ENCODE measurements at regions of chr17 and their contacts with region 1.

Region 1: DNA sequence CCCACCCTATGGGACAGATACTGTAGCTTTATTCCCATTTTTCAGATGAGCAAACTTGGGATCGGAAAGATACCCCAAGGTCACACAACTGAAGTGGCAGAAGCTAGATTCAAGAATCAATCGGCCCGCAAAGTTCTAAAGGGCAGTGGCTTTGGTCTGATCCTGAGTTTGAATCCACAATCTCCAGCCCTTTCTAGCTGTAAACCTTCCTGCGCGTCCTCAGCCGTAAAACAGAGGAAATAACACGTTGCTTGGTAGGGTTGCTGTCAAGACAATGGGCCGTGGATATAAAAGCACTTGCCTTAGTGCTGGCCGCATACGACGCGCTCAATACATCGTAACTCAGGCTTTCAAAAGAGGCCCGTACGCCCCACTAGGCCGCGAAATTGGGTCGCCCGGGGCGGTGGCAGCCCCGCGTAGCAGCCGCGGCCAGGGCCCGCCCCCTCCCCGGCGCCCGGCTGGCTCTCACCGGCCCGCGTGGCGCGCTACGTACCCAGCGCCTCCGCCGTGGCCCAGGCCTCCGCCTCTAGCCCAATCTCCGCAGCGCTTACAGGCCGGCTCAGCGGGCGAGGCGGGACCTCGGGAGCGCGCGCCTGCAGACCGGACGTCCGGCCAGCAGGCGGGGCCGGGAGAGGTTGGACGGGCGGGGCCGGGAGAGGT is at the start of gene DCAKD:
- DNase-seq: no peak
- ATAC-seq: peak; percentile 97
- H3K4me3 ChIP-seq: peak within 1 kb of the TSS; percentile 76
- H3K27ac ChIP-seq: peak within 1 kb of the TSS; percentile 95
- H3K4me1 ChIP-seq: peaks cover 13% of the 10 kb centered on the region
- H3K27me3 ChIP-seq: no peaks in the 10 kb centered on the region
- CTCF ChIP-seq: no peak
- EP300 ChIP-seq: no peak
- POLR2A ChIP-seq: peak; percentile 77; the same call in 1 of the 2 replicates
- RAD21 ChIP-seq: no peak
- polyA plus RNA-seq, gene DCAKD: 11.6 to 11.7 TPM

Region 2: DNA sequence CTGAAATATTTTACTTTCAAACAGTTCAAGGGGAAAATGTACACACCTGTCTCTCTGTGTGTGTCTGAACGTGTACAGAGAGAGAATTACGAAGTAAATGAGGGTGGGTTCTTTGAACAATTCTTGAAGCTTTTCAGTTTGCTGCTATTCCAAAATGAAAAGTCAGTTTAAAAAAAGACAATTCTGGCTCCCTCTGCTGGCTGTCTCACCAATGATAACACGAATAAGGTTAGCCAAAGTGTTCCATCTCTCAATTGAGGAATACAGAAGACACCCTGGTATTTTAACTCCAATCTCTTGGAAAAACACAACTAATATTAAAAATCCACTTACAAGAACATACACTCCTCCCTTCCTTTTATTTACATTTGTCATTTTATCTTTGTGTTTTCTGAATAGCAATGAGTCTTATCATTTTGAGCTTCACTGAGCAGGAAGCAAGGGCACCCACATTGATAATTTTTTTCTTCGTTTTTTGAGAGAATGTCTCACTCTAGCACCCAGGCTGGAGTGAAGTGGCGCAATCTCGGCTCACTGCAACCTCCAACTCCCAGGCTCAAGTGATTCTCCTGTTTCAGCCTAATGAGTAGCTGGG is 172.5 kb before region 1 on chr17:
- CTCF ChIA-PET with region 1: no interaction called
- POLR2A ChIA-PET with region 1: no interaction called
- RAD21 ChIA-PET with region 1: no interaction called
- SMC1A ChIA-PET with region 1: no interaction called
- in situ Hi-C with region 1: no loop called
- intact Hi-C with region 1: no loop called
- DNase-seq: no peak
- ATAC-seq: 0 out of 3 replicates have a peak, but pooled peaks have one; percentile 18
- H3K4me3 ChIP-seq: no peak overlapping the region
- H3K27ac ChIP-seq: no peak overlapping the region
- H3K4me1 ChIP-seq: no peaks in the 10 kb centered on the region
- H3K27me3 ChIP-seq: no peaks in the 10 kb centered on the region
- CTCF ChIP-seq: peak; percentile 43 to 58 (median 45); a peak in 5 of 6 replicates
- EP300 ChIP-seq: no peak
- POLR2A ChIP-seq: no peak
- RAD21 ChIP-seq: peak; percentile 34

Region 3: DNA sequence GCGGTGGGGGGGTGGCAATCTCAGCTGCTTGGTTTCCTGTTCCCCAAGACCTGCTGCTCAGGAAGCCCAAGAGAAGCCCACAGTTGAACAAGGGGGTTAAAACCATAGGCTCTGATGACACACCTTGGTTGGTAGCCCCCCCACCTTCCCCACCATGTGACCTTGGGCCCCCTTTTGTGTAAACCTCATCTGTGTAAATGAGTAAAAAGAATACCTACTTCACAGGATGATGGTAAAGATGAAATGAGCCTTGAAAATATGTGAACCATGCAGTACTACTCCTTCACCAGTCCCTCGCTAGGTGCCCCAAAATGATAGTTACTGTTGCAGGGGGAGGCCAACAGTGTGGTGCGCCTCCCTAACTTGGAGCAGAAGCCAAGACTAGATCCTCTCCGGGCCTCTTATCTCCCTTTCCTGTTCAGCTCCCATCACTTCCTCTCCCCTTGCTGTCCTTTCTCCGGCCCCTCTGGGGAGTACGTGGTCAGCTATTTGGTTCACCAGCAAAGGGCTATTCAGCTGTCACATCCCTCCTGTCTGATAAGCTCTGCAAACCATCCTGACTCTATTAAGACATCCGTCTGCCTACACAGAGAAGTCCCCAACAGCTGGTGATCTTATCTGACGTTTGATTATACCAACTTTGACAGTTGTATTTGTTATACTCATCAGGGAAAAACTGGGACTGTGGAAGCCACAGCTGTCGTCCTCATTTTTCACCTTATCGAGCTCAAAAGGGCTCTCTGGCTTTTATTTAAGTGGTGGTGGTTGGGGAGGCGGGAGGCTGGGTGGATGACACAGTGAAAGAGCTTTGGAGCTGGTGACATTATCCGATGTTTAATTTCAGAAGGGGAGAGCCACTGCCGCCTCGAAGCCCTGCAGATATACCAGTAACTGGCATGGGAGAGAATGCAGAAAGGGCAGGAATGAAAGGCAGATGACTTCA is 19.7 kb before region 1 on chr17:
- CTCF ChIA-PET with region 1: interaction called, 7 read pairs
- POLR2A ChIA-PET with region 1: interaction called, 29 read pairs
- RAD21 ChIA-PET with region 1: interaction called, 6 read pairs
- SMC1A ChIA-PET with region 1: interaction called, 20 read pairs
- in situ Hi-C with region 1: no loop called
- intact Hi-C with region 1: no loop called
- DNase-seq: no peak
- ATAC-seq: peak; percentile 39
- H3K4me3 ChIP-seq: no peak overlapping the region
- H3K27ac ChIP-seq: peak overlapping the region; percentile 63
- H3K4me1 ChIP-seq: peaks cover 23% of the 10 kb centered on the region
- H3K27me3 ChIP-seq: no peaks in the 10 kb centered on the region
- CTCF ChIP-seq: no peak
- EP300 ChIP-seq: no peak
- POLR2A ChIP-seq: no peak
- RAD21 ChIP-seq: no peak

Region 4: GRCh38 chr17:45038728-45039634 is 12.2 kb before region 1 on chr17:
- CTCF ChIA-PET with region 1: interaction called, 16 read pairs
- POLR2A ChIA-PET with region 1: interaction called, 34 read pairs
- RAD21 ChIA-PET with region 1: interaction called, 25 read pairs
- SMC1A ChIA-PET with region 1: interaction called, 30 read pairs
- in situ Hi-C with region 1: no loop called
- intact Hi-C with region 1: no loop called
- DNase-seq: no peak
- ATAC-seq: no peak
- H3K4me3 ChIP-seq: no peak overlapping the region
- H3K27ac ChIP-seq: peak overlapping the region; percentile 69
- H3K4me1 ChIP-seq: peaks cover 6% of the 10 kb centered on the region
- H3K27me3 ChIP-seq: no peaks in the 10 kb centered on the region
- CTCF ChIP-seq: no peak
- EP300 ChIP-seq: no peak
- POLR2A ChIP-seq: no peak
- RAD21 ChIP-seq: no peak

Region 5: GRCh38 chr17:45110668-45111611 is 59.8 kb after region 1 on chr17:
- CTCF ChIA-PET with region 1: no interaction called
- POLR2A ChIA-PET with region 1: no interaction called
- RAD21 ChIA-PET with region 1: no interaction called
- SMC1A ChIA-PET with region 1: no interaction called
- in situ Hi-C with region 1: no loop called
- intact Hi-C with region 1: no loop called
- DNase-seq: no peak
- ATAC-seq: peak; percentile 24; the same call in 2 of the 3 replicates
- H3K4me3 ChIP-seq: no peak overlapping the region
- H3K27ac ChIP-seq: no peak overlapping the region
- H3K4me1 ChIP-seq: peaks cover 11% of the 10 kb centered on the region; the same call in 1 of the 2 replicates
- H3K27me3 ChIP-seq: no peaks in the 10 kb centered on the region
- CTCF ChIP-seq: no peak
- EP300 ChIP-seq: no peak
- POLR2A ChIP-seq: no peak
- RAD21 ChIP-seq: no peak